B cell (primary cell): ENCODE measurements at regions of chr18 and their contacts with region 1.

Region 1: GRCh38 chr18:55415258-55415871 is 172.6 kb downstream of the TCF4 start:
- DNase-seq: peak; percentile 88
- ATAC-seq: peak; percentile 92
- H3K4me3 ChIP-seq: no peak overlapping the region
- H3K4me3 Mint-ChIP-seq: no peak overlapping the region
- H3K27ac ChIP-seq: no peak overlapping the region
- H3K27ac Mint-ChIP-seq: no peak overlapping the region
- H3K4me1 ChIP-seq: peaks cover 7 to 9% of the 10 kb centered on the region in 2 donors
- H3K4me1 Mint-ChIP-seq: peaks cover 34% of the 10 kb centered on the region
- H3K27me3 ChIP-seq: no peaks in the 10 kb centered on the region
- H3K27me3 Mint-ChIP-seq: no peaks in the 10 kb centered on the region
- CTCF ChIP-seq: peak; percentile 99

Region 2: DNA sequence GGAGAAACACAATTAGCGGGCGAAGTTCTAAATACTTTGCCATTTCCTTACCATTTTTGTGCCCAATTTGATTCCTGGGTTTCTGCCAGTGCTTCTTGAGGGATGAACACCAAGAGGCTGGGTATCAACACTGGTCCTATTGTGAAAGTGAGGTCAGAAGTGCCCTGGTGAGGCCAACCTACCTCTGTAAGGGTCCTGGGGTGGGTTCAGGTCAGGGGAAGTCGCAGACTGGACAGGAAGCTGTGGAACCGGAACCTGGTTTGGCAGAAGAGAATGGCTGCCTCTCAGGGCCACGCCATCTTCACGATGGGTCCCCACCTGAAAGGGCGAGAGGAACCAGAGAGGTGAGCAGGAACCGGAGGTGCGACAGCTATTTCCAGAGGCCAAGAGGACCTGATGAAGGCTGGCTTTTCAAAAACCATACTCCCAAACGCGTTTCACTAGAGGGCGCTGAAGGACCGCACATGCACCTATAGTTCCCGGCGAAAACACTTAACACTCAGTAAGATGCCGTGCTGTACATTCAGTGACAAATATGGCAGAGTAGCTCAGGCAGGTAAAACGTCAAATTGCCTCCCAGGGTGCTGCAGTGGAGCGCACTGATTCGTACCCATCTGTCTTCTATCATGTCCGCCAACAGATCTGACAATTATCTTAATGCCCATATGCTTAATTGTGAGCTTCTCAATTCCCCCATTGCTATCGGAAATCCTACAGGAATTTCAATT is 180.8 kb before region 1 on chr18:
- CTCF ChIA-PET with region 1: interaction called, 19 read pairs
- POLR2A ChIA-PET with region 1: no interaction called
- intact Hi-C with region 1: loop called (anchors 1 kb)
- DNase-seq: peak; percentile 85
- ATAC-seq: peak; percentile 75
- H3K4me3 ChIP-seq: no peak overlapping the region
- H3K4me3 Mint-ChIP-seq: peak overlapping the region; percentile 24
- H3K27ac ChIP-seq: peak overlapping the region in 1 of 2 donors; percentile 73
- H3K27ac Mint-ChIP-seq: peak overlapping the region; percentile 90
- H3K4me1 ChIP-seq: peaks cover 10 to 17% of the 10 kb centered on the region in 2 donors
- H3K4me1 Mint-ChIP-seq: peaks cover 39% of the 10 kb centered on the region
- H3K27me3 ChIP-seq: no peaks in the 10 kb centered on the region
- H3K27me3 Mint-ChIP-seq: no peaks in the 10 kb centered on the region
- CTCF ChIP-seq: peak; percentile 91

Region 3: GRCh38 chr18:55443776-55444175 is 28.4 kb after region 1 on chr18:
- CTCF ChIA-PET with region 1: interaction called, 12 read pairs
- POLR2A ChIA-PET with region 1: no interaction called
- intact Hi-C with region 1: no loop called
- DNase-seq: no peak
- ATAC-seq: no peak
- H3K4me3 ChIP-seq: no peak overlapping the region
- H3K4me3 Mint-ChIP-seq: no peak overlapping the region
- H3K27ac ChIP-seq: no peak overlapping the region
- H3K27ac Mint-ChIP-seq: no peak overlapping the region
- H3K4me1 ChIP-seq: peaks cover 46 to 49% of the 10 kb centered on the region in 2 donors
- H3K4me1 Mint-ChIP-seq: peaks cover 60% of the 10 kb centered on the region
- H3K27me3 ChIP-seq: no peaks in the 10 kb centered on the region
- H3K27me3 Mint-ChIP-seq: no peaks in the 10 kb centered on the region
- CTCF ChIP-seq: no peak

Region 4: GRCh38 chr18:55589625-55590291 is 174.4 kb after region 1 on chr18:
- CTCF ChIA-PET with region 1: interaction called, 8 read pairs
- POLR2A ChIA-PET with region 1: no interaction called
- intact Hi-C with region 1: loop called (anchors 2 kb)
- DNase-seq: peak; percentile 95
- ATAC-seq: peak; percentile 87
- H3K4me3 ChIP-seq: peak overlapping the region; percentile 62 to 90 (median 71)
- H3K4me3 Mint-ChIP-seq: peak overlapping the region; percentile 89
- H3K27ac ChIP-seq: peak overlapping the region; percentile 77 to 82
- H3K27ac Mint-ChIP-seq: peak overlapping the region; percentile 92
- H3K4me1 ChIP-seq: peaks cover 20 to 21% of the 10 kb centered on the region in 2 donors
- H3K4me1 Mint-ChIP-seq: peaks cover 37% of the 10 kb centered on the region
- H3K27me3 ChIP-seq: peaks cover 0 to 6% (median 2%) of the 10 kb centered on the region in 4 experiments
- H3K27me3 Mint-ChIP-seq: peaks cover 15% of the 10 kb centered on the region
- CTCF ChIP-seq: no peak

Region 5: DNA sequence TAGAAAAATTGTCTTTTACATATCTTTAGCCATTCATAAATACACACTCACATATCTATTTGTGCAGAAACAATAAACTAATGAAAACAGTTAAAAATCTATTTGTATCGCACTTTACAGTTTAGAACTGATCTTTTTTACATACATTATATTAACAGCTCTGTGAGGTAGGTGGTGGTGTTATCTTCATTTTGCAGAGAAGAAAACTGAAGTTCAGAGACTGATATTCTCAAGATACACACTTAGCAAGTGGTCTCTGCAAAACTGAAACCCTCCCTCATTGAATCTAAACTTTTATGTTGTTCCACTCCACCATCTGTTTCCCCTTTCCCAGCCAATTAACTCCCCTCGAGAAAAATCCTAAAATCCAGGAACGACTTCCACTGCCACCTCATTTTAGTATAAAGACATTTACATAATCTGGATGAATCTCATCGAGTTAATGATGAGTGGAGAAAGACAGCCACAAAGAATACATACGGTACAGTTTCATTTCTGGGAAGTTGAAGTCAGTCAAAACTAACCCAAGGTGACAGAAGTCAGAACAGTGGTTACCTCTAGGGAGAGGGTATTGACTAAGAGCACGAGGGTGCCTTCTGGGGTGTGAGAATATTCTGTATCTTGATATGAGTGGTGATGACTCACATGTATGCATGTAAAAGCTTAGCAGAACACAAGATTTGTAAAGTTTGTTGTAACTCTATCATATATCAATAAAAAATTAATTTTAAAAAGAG is 696.8 kb after region 1 on chr18:
- CTCF ChIA-PET with region 1: no interaction called
- POLR2A ChIA-PET with region 1: no interaction called
- intact Hi-C with region 1: loop called (anchors 10 kb)
- DNase-seq: peak; percentile 19
- ATAC-seq: peak; percentile 64
- H3K4me3 ChIP-seq: peak overlapping the region in 2 of 5 experiments; percentile 9 to 34
- H3K4me3 Mint-ChIP-seq: peak overlapping the region; percentile 72
- H3K27ac ChIP-seq: peak overlapping the region in 1 of 2 donors; percentile 11
- H3K27ac Mint-ChIP-seq: no peak overlapping the region
- H3K4me1 ChIP-seq: peaks cover 34 to 43% of the 10 kb centered on the region in 2 donors
- H3K4me1 Mint-ChIP-seq: peaks cover 44% of the 10 kb centered on the region
- H3K27me3 ChIP-seq: no peaks in the 10 kb centered on the region
- H3K27me3 Mint-ChIP-seq: no peaks in the 10 kb centered on the region
- CTCF ChIP-seq: no peak

Region 6: GRCh38 chr18:56322406-56322805 is 907.0 kb after region 1 on chr18:
- CTCF ChIA-PET with region 1: interaction called, 6 read pairs
- POLR2A ChIA-PET with region 1: no interaction called
- intact Hi-C with region 1: loop called (anchors 2 kb)
- DNase-seq: no peak
- ATAC-seq: no peak
- H3K4me3 ChIP-seq: no peak overlapping the region
- H3K4me3 Mint-ChIP-seq: no peak overlapping the region
- H3K27ac ChIP-seq: no peak overlapping the region
- H3K27ac Mint-ChIP-seq: no peak overlapping the region
- H3K4me1 ChIP-seq: peaks cover 40 to 47% of the 10 kb centered on the region in 2 donors
- H3K4me1 Mint-ChIP-seq: peaks cover 45% of the 10 kb centered on the region
- H3K27me3 ChIP-seq: no peaks in the 10 kb centered on the region
- H3K27me3 Mint-ChIP-seq: no peaks in the 10 kb centered on the region
- CTCF ChIP-seq: no peak

Region 7: GRCh38 chr18:56575819-56576663 is 1160.7 kb after region 1 on chr18:
- CTCF ChIA-PET with region 1: interaction called, 52 read pairs
- POLR2A ChIA-PET with region 1: no interaction called
- intact Hi-C with region 1: loop called (anchors 1 kb)
- DNase-seq: peak; percentile 68
- ATAC-seq: peak; percentile 54
- H3K4me3 ChIP-seq: no peak overlapping the region
- H3K4me3 Mint-ChIP-seq: no peak overlapping the region
- H3K27ac ChIP-seq: no peak overlapping the region
- H3K27ac Mint-ChIP-seq: no peak overlapping the region
- H3K4me1 ChIP-seq: no peaks in the 10 kb centered on the region
- H3K4me1 Mint-ChIP-seq: no peaks in the 10 kb centered on the region
- H3K27me3 ChIP-seq: no peaks in the 10 kb centered on the region
- H3K27me3 Mint-ChIP-seq: no peaks in the 10 kb centered on the region
- CTCF ChIP-seq: peak; percentile 83